K562 (cell line): ENCODE measurements at regions of chr16 and their contacts with region 1.

Region 1: DNA sequence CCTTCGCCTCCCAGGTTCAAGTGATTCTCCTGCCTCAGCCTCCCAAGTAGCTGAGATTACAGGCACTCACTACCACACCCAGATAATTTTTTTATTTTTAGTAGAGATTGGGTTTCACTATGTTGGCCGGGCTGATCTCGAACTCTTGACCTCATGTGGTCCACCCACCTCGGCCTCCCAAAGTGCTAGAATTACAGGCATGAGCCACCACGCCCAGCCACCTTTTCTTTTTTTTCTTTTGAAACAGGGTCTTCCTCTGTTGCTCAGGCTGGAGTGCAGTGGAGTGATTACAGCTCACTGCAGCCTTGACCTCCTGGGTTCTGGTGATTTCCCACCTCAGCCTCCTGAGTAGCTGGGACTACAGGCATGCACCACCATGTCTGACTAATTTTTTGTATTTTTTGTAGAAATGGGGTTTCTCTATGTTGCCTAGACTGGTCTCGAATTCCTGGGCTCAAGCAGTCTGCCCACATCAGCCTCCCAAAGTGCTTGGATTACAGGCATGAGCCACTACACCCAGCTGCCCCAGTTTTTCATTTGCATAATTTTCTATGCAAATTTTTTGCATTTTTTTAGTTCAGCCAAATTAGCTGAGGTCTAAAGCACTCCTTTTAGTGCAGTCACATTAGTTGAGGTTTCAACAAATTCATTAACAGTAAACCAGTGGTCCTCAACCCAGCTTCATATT is 11.3 kb downstream of the WWP2 start:
- DNase-seq: peak in 1 of 4 experiments; percentile 25
- ATAC-seq: peak; percentile 45
- H3K4me3 ChIP-seq: no peak overlapping the region
- H3K27ac ChIP-seq: no peak overlapping the region
- H3K4me1 ChIP-seq: peaks cover 6 to 9% of the 10 kb centered on the region in 2 experiments; a peak in 4 of 5 replicates
- H3K27me3 ChIP-seq: no peaks in the 10 kb centered on the region
- CTCF ChIP-seq: no peak
- EP300 ChIP-seq: no peak
- POLR2A ChIP-seq: no peak
- RAD21 ChIP-seq: no peak

Region 2: GRCh38 chr16:69761983-69762813 is 11.2 kb before region 1 on chr16 and contains the start of gene WWP2:
- CTCF ChIA-PET with region 1: no interaction called
- POLR2A ChIA-PET with region 1: interaction called, 14 read pairs
- in situ Hi-C with region 1: no loop called
- intact Hi-C with region 1: no loop called
- DNase-seq: peak; percentile 87 to 94 (median 90)
- ATAC-seq: peak; percentile 84
- H3K4me3 ChIP-seq: peak within 1 kb of the TSS; percentile 97
- H3K27ac ChIP-seq: peak within 1 kb of the TSS; percentile 85
- H3K4me1 ChIP-seq: peaks cover 6 to 8% of the 10 kb centered on the region in 2 experiments; a peak in 4 of 5 replicates
- H3K27me3 ChIP-seq: no peaks in the 10 kb centered on the region
- CTCF ChIP-seq: no peak
- EP300 ChIP-seq: no peak
- POLR2A ChIP-seq: peak; percentile 84
- RAD21 ChIP-seq: no peak
- polyA plus RNA-seq, gene WWP2: 1.9 to 2.0 TPM

Region 3: GRCh38 chr16:69833357-69834282 is 60.2 kb after region 1 on chr16:
- CTCF ChIA-PET with region 1: no interaction called
- POLR2A ChIA-PET with region 1: no interaction called
- in situ Hi-C with region 1: no loop called
- intact Hi-C with region 1: no loop called
- DNase-seq: no peak
- ATAC-seq: no peak
- H3K4me3 ChIP-seq: no peak overlapping the region
- H3K27ac ChIP-seq: no peak overlapping the region
- H3K4me1 ChIP-seq: no peaks in the 10 kb centered on the region
- H3K27me3 ChIP-seq: no peaks in the 10 kb centered on the region
- CTCF ChIP-seq: no peak
- EP300 ChIP-seq: no peak
- POLR2A ChIP-seq: no peak
- RAD21 ChIP-seq: no peak